Colonic mucosa (tissue), 4 donors: ENCODE measurements at regions of chr6 and their contacts with region 1.

Region 1: GRCh38 chr6:7604506-7604905 is 14.5 kb downstream of the SNRNP48 start:
- DNase-seq: no peak
- H3K4me3 ChIP-seq: no peak overlapping the region
- H3K27ac ChIP-seq: no peak overlapping the region
- H3K4me1 ChIP-seq: no peaks in the 10 kb centered on the region
- H3K27me3 ChIP-seq: no peaks in the 10 kb centered on the region
- CTCF ChIP-seq: no peak

Region 2: DNA sequence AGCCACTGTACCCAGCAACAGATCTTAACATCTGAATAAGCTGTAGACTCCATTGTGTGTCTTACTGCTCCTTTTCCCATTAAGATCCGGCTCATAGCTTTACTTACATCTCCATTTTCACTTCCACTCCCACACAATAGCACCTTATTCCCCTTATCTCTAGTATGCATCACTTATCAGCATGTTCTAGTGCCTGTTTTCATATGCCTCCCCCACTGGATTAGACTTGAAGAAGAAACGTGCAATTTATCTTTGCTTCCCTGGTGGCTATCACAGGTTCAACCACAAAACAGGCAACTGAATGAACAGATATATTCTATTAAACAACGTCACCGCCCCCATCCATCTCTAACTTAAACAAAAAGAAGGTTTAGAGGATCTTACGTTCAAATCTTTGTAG is 303.6 kb before region 1 on chr6:
- intact Hi-C with region 1: loop called (anchors 5 kb)
- DNase-seq: no peak
- H3K4me3 ChIP-seq: no peak overlapping the region
- H3K27ac ChIP-seq: no peak overlapping the region
- H3K4me1 ChIP-seq: no peaks in the 10 kb centered on the region
- H3K27me3 ChIP-seq: no peaks in the 10 kb centered on the region
- CTCF ChIP-seq: no peak